ENCODE measurements at regions of chr2 and their contacts with region 1.

Region 1: GRCh38 chr2:74391580-74392448 is 11.7 kb upstream of the DCTN1 start:
- DNase-seq: peak; percentile 97
- ATAC-seq: peak; percentile 88
- H3K4me3 Mint-ChIP-seq: peak overlapping the region; percentile 93
- H3K27ac Mint-ChIP-seq: peak overlapping the region; percentile 99
- H3K4me1 Mint-ChIP-seq: peaks cover 7% of the 10 kb centered on the region
- H3K27me3 Mint-ChIP-seq: peaks cover 6% of the 10 kb centered on the region

Region 2: DNA sequence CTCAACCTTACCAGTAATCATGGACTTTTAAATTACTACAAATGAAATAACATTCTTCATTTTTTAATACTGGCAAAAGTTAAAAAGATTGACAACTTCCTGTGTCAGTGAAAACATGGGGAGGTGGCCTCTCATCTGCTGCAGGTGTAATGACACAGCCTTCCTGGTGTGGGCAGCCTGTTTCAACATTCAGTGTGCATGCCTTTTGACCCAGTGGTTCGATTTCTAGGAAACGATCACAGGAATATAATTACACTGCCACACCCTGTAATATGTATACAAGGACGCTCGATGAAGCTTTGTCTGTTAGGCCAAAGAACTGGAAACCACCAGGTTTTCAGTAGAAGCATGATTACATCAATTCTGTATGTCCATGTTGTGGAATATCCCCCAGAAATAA is 124.7 kb before region 1 on chr2:
- CTCF ChIA-PET with region 1: interaction called, 12 read pairs
- POLR2A ChIA-PET with region 1: no interaction called
- DNase-seq: peak; percentile 86
- ATAC-seq: peak; percentile 98
- H3K4me3 Mint-ChIP-seq: peak overlapping the region; percentile 53
- H3K27ac Mint-ChIP-seq: peak overlapping the region; percentile 86
- H3K4me1 Mint-ChIP-seq: peaks cover 23% of the 10 kb centered on the region
- H3K27me3 Mint-ChIP-seq: no peaks in the 10 kb centered on the region

Region 3: GRCh38 chr2:74379851-74380789 is 11.7 kb before region 1 on chr2 and contains the start of gene DCTN1:
- CTCF ChIA-PET with region 1: interaction called, 25 read pairs
- POLR2A ChIA-PET with region 1: interaction called, 6 read pairs
- DNase-seq: peak; percentile 32
- ATAC-seq: peak; percentile 60
- H3K4me3 Mint-ChIP-seq: no peak within 1 kb of the TSS
- H3K27ac Mint-ChIP-seq: peak within 1 kb of the TSS; percentile 16
- H3K4me1 Mint-ChIP-seq: peaks cover 45% of the 10 kb centered on the region
- H3K27me3 Mint-ChIP-seq: no peaks in the 10 kb centered on the region
- total RNA-seq, gene DCTN1: 112 to 115 TPM